Activated CD4-positive, alpha-beta T cell treated with anti-CD3 and anti-CD28 coated beads for 36 hours (primary cell): ENCODE measurements at regions of chr1 and their contacts with region 1.

Region 1: DNA sequence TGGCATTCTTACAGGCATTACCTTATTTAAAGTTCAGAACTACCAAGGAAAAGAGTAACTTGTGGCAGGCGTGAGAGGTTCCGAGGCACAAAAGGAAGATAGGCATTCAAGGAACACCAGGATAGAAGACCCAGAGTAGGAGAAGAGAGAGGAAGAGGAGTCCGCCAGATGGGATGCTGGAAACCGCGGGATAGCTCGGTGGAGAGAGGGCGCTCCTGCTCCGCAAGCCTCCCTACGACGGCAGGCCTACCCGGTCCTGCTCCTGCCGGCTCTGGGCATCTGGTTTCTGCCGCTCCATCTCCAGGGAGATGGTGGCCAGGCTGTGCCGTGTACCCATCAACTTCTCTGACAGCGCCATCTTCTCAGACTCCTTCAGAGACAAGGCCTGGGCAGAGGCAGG is 5.4 kb upstream of the NBPF1 start:
- DNase-seq: peak; percentile 9
- ATAC-seq: no peak
- H3K4me3 Mint-ChIP-seq: no peak overlapping the region
- H3K27ac Mint-ChIP-seq: no peak overlapping the region
- H3K4me1 Mint-ChIP-seq: no peaks in the 10 kb centered on the region
- H3K27me3 Mint-ChIP-seq: no peaks in the 10 kb centered on the region

Region 2: DNA sequence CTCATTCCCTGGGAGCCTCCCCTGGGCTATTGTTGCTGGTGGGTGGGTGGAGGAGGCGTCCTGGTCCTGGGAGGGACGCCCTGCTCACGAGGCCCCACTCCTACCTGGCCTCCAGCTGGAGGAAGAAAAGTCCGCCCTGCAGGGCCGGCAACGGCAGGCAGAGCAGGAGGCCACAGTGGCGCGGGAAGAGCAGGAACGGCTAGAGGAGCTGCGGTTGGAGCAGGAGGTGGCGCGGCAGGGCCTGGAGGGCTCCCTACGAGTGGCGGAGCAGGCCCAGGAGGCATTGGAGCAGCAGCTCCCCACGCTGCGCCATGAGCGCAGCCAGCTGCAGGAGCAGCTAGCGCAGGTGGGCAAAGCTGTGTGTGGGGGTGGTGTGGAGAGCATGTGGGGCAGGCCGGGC is 327.9 kb after region 1 on chr1:
- CTCF ChIA-PET with region 1: interaction called, 24 read pairs
- POLR2A ChIA-PET with region 1: interaction called, 6 read pairs
- intact Hi-C with region 1: loop called (anchors 1 kb)
- DNase-seq: no peak
- ATAC-seq: no peak
- H3K4me3 Mint-ChIP-seq: no peak overlapping the region
- H3K27ac Mint-ChIP-seq: no peak overlapping the region
- H3K4me1 Mint-ChIP-seq: no peaks in the 10 kb centered on the region
- H3K27me3 Mint-ChIP-seq: no peaks in the 10 kb centered on the region